Mammary epithelial cell (primary cell): ENCODE measurements at regions of chr2 and their contacts with region 1.

Region 1: DNA sequence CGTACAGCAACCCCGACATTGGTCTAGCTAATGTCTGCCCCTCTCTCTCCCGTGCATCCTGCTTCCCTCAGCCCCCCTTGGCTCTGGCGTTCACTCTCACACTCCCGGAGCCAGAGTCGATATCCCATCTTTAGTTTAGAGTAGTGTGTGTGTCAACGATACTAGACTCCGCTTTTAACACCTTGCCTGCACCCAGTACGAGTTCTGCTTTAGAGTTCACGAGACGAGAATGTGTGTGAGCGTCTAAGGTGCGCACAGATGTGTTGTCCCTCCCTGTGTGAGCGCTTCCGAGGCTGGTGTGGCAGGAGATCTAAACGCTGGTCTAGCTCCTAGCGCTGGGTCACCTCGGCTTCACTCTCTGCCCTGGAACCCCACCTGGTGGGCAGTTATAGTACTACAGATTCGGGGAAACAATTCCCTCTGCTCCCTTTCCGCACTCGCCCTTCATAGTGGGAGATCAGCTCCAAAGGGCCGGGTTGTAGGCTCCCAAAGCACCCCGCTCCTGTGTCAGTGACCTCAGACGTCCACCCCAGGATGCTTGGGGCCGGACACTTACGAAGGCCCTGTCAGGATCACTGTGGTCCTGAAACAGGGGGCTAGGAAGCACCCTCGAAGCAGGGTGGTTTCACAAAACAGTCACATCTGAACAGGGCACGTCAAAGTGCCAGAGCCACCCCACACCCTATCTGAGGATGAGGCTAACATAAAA is 2.6 kb upstream of the CYP26B1 start:
- DNase-seq: peak; percentile 65
- H3K4me3 ChIP-seq: peak overlapping the region in 2 of 3 experiments; percentile 23 to 28
- H3K27ac ChIP-seq: no peak overlapping the region
- H3K4me1 ChIP-seq: peaks cover 32% of the 10 kb centered on the region
- H3K27me3 ChIP-seq: peaks cover 22% of the 10 kb centered on the region
- CTCF ChIP-seq: peak; percentile 66 to 84

Region 2: GRCh38 chr2:70580352-70580751 is 1570.0 kb before region 1 on chr2:
- CTCF ChIA-PET with region 1: no interaction called
- dilution Hi-C with region 1: no loop called
- in situ Hi-C with region 1: no loop called
- intact Hi-C with region 1: no loop called
- DNase-seq: no peak
- H3K4me3 ChIP-seq: no peak overlapping the region
- H3K27ac ChIP-seq: no peak overlapping the region
- H3K4me1 ChIP-seq: no peaks in the 10 kb centered on the region
- H3K27me3 ChIP-seq: no peaks in the 10 kb centered on the region
- CTCF ChIP-seq: no peak

Region 3: GRCh38 chr2:71609958-71610357 is 540.4 kb before region 1 on chr2:
- CTCF ChIA-PET with region 1: no interaction called
- dilution Hi-C with region 1: no loop called
- in situ Hi-C with region 1: no loop called
- intact Hi-C with region 1: loop called (anchors 2 kb)
- DNase-seq: peak; percentile 10
- H3K4me3 ChIP-seq: no peak overlapping the region
- H3K27ac ChIP-seq: no peak overlapping the region
- H3K4me1 ChIP-seq: no peaks in the 10 kb centered on the region
- H3K27me3 ChIP-seq: no peaks in the 10 kb centered on the region
- CTCF ChIP-seq: peak; percentile 6 to 42

Region 4: GRCh38 chr2:71876542-71877451 is 273.5 kb before region 1 on chr2:
- CTCF ChIA-PET with region 1: no interaction called
- dilution Hi-C with region 1: no loop called
- in situ Hi-C with region 1: no loop called
- intact Hi-C with region 1: loop called (anchors 2 kb)
- DNase-seq: no peak
- H3K4me3 ChIP-seq: no peak overlapping the region
- H3K27ac ChIP-seq: no peak overlapping the region
- H3K4me1 ChIP-seq: peaks cover 16% of the 10 kb centered on the region
- H3K27me3 ChIP-seq: no peaks in the 10 kb centered on the region
- CTCF ChIP-seq: no peak

Region 5: GRCh38 chr2:71995067-71995665 is 155.1 kb before region 1 on chr2:
- CTCF ChIA-PET with region 1: no interaction called
- dilution Hi-C with region 1: no loop called
- in situ Hi-C with region 1: no loop called
- intact Hi-C with region 1: loop called (anchors 2 kb)
- DNase-seq: peak; percentile 8
- H3K4me3 ChIP-seq: no peak overlapping the region
- H3K27ac ChIP-seq: no peak overlapping the region
- H3K4me1 ChIP-seq: no peaks in the 10 kb centered on the region
- H3K27me3 ChIP-seq: no peaks in the 10 kb centered on the region
- CTCF ChIP-seq: peak; percentile 18 to 55

Region 6: DNA sequence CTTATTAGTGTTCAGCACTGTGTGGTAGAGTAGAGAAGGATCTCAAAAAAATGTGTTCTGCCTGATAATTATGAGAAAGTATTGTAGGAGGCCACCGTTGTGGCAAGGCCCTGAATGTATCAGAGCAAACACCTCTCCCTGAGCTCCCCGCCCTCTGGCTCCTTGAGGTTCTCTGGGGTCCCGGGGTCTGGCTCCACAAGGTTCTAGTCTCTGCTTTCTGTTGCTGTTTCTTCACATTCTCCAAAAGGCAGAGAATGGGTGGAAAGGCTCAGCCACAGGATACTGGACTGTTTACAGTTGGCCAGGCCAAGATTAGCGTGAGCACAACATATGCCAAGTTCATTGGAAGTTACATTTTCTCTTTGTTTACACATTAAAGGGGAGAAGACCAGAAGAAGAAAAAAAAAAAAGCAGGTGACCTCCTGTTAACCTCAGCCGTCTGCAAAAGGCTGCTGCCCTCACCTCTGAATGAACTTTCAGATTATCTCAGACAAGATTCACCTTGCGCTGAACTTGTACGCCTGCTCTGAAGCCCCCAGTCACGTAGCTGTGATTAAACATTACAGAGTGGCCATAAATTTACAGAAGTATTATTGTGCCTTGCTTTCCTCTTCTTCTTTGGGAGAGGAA is 54.0 kb after region 1 on chr2:
- CTCF ChIA-PET with region 1: no interaction called
- dilution Hi-C with region 1: no loop called
- in situ Hi-C with region 1: no loop called
- intact Hi-C with region 1: no loop called
- DNase-seq: no peak
- H3K4me3 ChIP-seq: no peak overlapping the region
- H3K27ac ChIP-seq: no peak overlapping the region
- H3K4me1 ChIP-seq: peaks cover 8% of the 10 kb centered on the region
- H3K27me3 ChIP-seq: no peaks in the 10 kb centered on the region
- CTCF ChIP-seq: no peak

Region 7: GRCh38 chr2:72367530-72368225 is 217.4 kb after region 1 on chr2:
- CTCF ChIA-PET with region 1: no interaction called
- dilution Hi-C with region 1: no loop called
- in situ Hi-C with region 1: no loop called
- intact Hi-C with region 1: loop called (anchors 2 kb)
- DNase-seq: peak; percentile 98
- H3K4me3 ChIP-seq: no peak overlapping the region
- H3K27ac ChIP-seq: no peak overlapping the region
- H3K4me1 ChIP-seq: peaks cover 6% of the 10 kb centered on the region
- H3K27me3 ChIP-seq: no peaks in the 10 kb centered on the region
- CTCF ChIP-seq: peak; percentile 64 to 84

Region 8: GRCh38 chr2:72694715-72695496 is 544.6 kb after region 1 on chr2:
- CTCF ChIA-PET with region 1: no interaction called
- dilution Hi-C with region 1: no loop called
- in situ Hi-C with region 1: no loop called
- intact Hi-C with region 1: no loop called
- DNase-seq: no peak
- H3K4me3 ChIP-seq: no peak overlapping the region
- H3K27ac ChIP-seq: no peak overlapping the region
- H3K4me1 ChIP-seq: peaks cover under 1% of the 10 kb centered on the region
- H3K27me3 ChIP-seq: no peaks in the 10 kb centered on the region
- CTCF ChIP-seq: no peak